Mammary epithelial cell (primary cell): ENCODE measurements at regions of chr2 and their contacts with region 1.

Region 1: DNA sequence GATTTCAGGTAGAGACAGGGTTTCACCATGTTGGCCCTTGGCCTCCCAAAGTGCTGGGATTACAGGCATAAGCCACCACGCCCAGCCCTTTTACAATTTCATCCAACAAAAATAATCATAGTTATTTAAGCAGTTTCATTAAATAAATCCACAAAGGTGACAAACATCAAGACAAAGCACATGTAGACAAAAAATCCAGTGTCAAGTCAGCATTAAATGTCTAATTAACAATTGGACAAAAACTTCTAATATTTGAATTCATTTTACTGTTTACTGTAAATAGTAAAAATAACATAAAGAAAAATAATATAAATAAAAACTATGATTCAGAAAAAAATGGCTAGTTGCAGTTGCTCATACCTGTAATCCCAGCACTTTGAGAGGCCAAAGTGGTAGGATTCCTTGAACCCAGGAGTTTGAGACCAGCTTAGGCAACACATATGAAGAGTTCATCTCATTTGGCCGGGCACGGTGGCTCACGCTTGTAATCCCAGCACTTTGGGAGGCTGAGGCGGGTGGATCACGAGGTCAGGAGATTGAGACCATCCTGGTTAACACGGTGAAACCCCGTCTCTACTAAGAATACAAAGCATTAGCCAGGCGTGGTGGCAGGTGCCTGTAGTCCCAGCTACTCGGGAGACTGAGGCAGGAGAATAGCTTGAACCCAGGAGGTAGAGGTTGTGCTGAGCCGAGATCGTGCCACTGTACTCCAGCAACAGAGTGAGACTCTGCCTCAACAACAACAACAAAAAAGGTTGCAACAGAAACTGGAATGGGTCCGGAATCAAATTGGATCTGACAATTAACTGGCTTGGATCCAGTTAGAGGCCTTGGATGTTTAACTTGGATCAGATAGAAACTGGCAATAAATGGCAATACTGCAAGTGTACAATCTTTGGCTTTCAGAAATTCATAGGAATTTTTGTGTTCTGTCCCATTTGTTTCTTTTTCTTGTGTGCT is 56.9 kb upstream of the MAT2A start:
- DNase-seq: no peak
- H3K4me3 ChIP-seq: no peak overlapping the region
- H3K27ac ChIP-seq: no peak overlapping the region
- H3K4me1 ChIP-seq: no peaks in the 10 kb centered on the region
- H3K27me3 ChIP-seq: no peaks in the 10 kb centered on the region
- CTCF ChIP-seq: no peak

Region 2: GRCh38 chr2:85452237-85452636 is 29.9 kb before region 1 on chr2:
- CTCF ChIA-PET with region 1: no interaction called
- dilution Hi-C with region 1: no loop called
- in situ Hi-C with region 1: no loop called
- intact Hi-C with region 1: loop called (anchors 1 kb)
- DNase-seq: no peak
- H3K4me3 ChIP-seq: no peak overlapping the region
- H3K27ac ChIP-seq: no peak overlapping the region
- H3K4me1 ChIP-seq: peaks cover 4% of the 10 kb centered on the region
- H3K27me3 ChIP-seq: no peaks in the 10 kb centered on the region
- CTCF ChIP-seq: no peak

Region 3: DNA sequence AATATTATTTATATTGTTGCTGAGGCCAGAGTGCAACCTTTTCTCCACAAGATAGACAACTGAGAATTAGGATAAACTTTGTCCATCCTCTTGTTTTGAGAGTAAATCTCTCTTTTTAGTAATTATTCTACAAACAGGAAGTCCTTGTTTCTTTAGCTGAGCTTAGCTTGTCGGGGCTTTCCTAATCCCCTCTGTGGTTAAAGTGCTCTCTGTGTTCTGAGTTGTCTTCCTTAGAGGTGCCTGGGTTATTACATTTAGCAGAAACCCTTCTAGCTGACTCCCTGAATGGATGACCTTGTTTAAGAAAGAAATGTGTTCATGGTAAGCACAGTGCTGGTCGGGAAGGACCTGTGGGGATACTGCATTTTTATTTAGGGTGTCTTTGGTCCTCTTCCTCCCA is 146.6 kb after region 1 on chr2:
- CTCF ChIA-PET with region 1: no interaction called
- dilution Hi-C with region 1: no loop called
- in situ Hi-C with region 1: no loop called
- intact Hi-C with region 1: no loop called
- DNase-seq: no peak
- H3K4me3 ChIP-seq: no peak overlapping the region
- H3K27ac ChIP-seq: no peak overlapping the region
- H3K4me1 ChIP-seq: no peaks in the 10 kb centered on the region
- H3K27me3 ChIP-seq: no peaks in the 10 kb centered on the region
- CTCF ChIP-seq: no peak